MCF 10A (cell line): ENCODE measurements at regions of chr2 and their contacts with region 1.

Region 1: DNA sequence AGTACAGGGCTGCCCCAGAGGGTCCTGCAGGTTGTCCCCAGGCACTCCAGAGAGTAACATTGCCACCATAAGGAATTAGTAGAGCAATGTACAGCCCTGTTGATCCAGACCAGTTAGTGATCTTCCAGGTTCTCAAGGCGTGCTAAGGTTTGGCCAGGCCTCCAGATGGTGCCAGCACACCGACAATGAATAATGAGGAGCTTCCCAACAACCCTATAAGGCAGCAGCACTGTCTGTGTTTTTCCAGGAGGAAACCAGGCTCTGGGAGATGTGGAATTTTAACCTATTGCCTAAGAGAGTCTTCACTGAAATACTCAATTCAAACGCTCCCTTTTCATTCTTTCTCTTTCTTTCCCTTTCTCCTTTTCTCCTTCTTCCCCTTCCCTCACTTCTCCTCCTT is 122.1 kb downstream of the MGAT5 start:
- DNase-seq: peak; percentile 52
- H3K4me3 Mint-ChIP-seq: no peak overlapping the region
- H3K27ac Mint-ChIP-seq: no peak overlapping the region
- H3K4me1 Mint-ChIP-seq: peaks cover 34% of the 10 kb centered on the region
- H3K27me3 Mint-ChIP-seq: no peaks in the 10 kb centered on the region
- CTCF ChIP-seq: peak; percentile 22

Region 2: GRCh38 chr2:133886735-133887660 is 488.9 kb before region 1 on chr2:
- CTCF ChIA-PET with region 1: interaction called, 4 read pairs
- POLR2A ChIA-PET with region 1: no interaction called
- intact Hi-C with region 1: loop called (anchors 5 kb)
- DNase-seq: peak; percentile 87
- H3K4me3 Mint-ChIP-seq: no peak overlapping the region
- H3K27ac Mint-ChIP-seq: no peak overlapping the region
- H3K4me1 Mint-ChIP-seq: peaks cover 7% of the 10 kb centered on the region
- H3K27me3 Mint-ChIP-seq: peaks cover 14% of the 10 kb centered on the region
- CTCF ChIP-seq: peak; percentile 52

Region 3: DNA sequence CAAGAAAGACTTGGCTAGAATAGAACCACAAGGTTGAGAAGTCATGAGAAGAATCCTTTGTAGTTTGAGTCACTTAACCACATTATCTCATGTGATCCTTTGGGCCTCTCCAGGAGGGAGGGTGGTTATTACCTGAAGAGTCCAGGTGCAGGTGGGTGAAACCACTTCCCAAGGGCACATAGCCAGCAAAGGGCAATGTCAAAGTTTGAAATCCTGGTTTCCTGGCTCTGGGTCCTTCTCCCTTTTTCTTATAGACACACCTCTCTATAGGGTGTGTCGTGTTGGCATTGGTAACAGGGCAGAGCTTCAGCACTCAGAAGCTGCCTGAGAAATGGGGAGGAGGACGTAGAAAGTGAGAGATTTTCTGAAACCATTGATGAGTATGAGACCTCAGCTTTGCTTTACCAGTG is 15.8 kb after region 1 on chr2:
- CTCF ChIA-PET with region 1: interaction called, 24 read pairs
- POLR2A ChIA-PET with region 1: no interaction called
- intact Hi-C with region 1: no loop called
- DNase-seq: peak; percentile 83
- H3K4me3 Mint-ChIP-seq: peak overlapping the region; percentile 44
- H3K27ac Mint-ChIP-seq: peak overlapping the region; percentile 50
- H3K4me1 Mint-ChIP-seq: peaks cover 23% of the 10 kb centered on the region
- H3K27me3 Mint-ChIP-seq: no peaks in the 10 kb centered on the region
- CTCF ChIP-seq: no peak

Region 4: DNA sequence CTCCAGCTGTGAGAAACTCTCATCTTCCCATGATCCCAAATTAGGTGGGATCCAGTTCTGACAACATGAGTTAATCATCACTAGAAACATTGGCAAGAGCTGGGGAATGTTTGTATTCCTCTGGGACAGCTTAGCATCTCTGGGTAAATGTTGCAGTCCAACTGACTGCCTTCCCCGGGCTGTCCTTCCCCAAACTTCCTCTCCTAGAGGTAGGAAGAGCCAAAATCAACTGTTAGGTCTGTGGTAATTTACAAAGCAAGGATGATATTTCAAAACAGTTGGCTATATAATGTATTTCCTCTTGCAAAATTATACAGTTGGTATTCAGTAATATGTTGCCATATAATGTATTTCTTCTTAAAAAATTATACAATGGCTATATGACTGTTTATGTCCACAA is 26.5 kb after region 1 on chr2:
- CTCF ChIA-PET with region 1: interaction called, 12 read pairs
- POLR2A ChIA-PET with region 1: interaction called, 5 read pairs
- intact Hi-C with region 1: no loop called
- DNase-seq: peak; percentile 84
- H3K4me3 Mint-ChIP-seq: no peak overlapping the region
- H3K27ac Mint-ChIP-seq: peak overlapping the region; percentile 8
- H3K4me1 Mint-ChIP-seq: peaks cover 79% of the 10 kb centered on the region
- H3K27me3 Mint-ChIP-seq: no peaks in the 10 kb centered on the region
- CTCF ChIP-seq: no peak

Region 5: GRCh38 chr2:134443814-134444480 is 68.0 kb after region 1 on chr2:
- CTCF ChIA-PET with region 1: interaction called, 105 read pairs
- POLR2A ChIA-PET with region 1: no interaction called
- intact Hi-C with region 1: no loop called
- DNase-seq: no peak
- H3K4me3 Mint-ChIP-seq: no peak overlapping the region
- H3K27ac Mint-ChIP-seq: no peak overlapping the region
- H3K4me1 Mint-ChIP-seq: no peaks in the 10 kb centered on the region
- H3K27me3 Mint-ChIP-seq: no peaks in the 10 kb centered on the region
- CTCF ChIP-seq: no peak